ENCODE measurements at regions of chr10 and their contacts with region 1.

Region 1: GRCh38 chr10:133347710-133348517 is 741 bp downstream of the PRAP1 start:
- DNase-seq: peak; percentile 75
- ATAC-seq: peak; percentile 66
- H3K4me3 ChIP-seq: peak overlapping the region; percentile 51 to 74 (median 59)
- H3K27ac ChIP-seq: peak overlapping the region; percentile 80
- H3K4me1 ChIP-seq: peaks cover 65% of the 10 kb centered on the region
- H3K27me3 ChIP-seq: no peaks in the 10 kb centered on the region
- CTCF ChIP-seq: peak; percentile 36; the same call in 1 of the 2 replicates
- EP300 ChIP-seq: peak in 1 of 2 experiments; percentile 66; a peak in 1 of 4 replicates
- POLR2A ChIP-seq: no peak
- RAD21 ChIP-seq: peak; percentile 38

Region 2: GRCh38 chr10:132774902-132775747 is 572.8 kb before region 1 on chr10:
- CTCF ChIA-PET with region 1: no interaction called
- POLR2A ChIA-PET with region 1: no interaction called
- in situ Hi-C with region 1: no loop called
- intact Hi-C with region 1: no loop called
- DNase-seq: no peak
- ATAC-seq: no peak
- H3K4me3 ChIP-seq: no peak overlapping the region; a peak in 1 of 6 replicates
- H3K27ac ChIP-seq: no peak overlapping the region
- H3K4me1 ChIP-seq: peaks cover 12% of the 10 kb centered on the region
- H3K27me3 ChIP-seq: no peaks in the 10 kb centered on the region
- CTCF ChIP-seq: no peak
- EP300 ChIP-seq: no peak
- POLR2A ChIP-seq: no peak
- RAD21 ChIP-seq: no peak

Region 3: GRCh38 chr10:133264461-133264860 is 83.5 kb before region 1 on chr10:
- CTCF ChIA-PET with region 1: no interaction called
- POLR2A ChIA-PET with region 1: no interaction called
- in situ Hi-C with region 1: no loop called
- intact Hi-C with region 1: no loop called
- DNase-seq: no peak
- ATAC-seq: no peak
- H3K4me3 ChIP-seq: no peak overlapping the region
- H3K27ac ChIP-seq: no peak overlapping the region
- H3K4me1 ChIP-seq: peaks cover 11% of the 10 kb centered on the region; the same call in 1 of the 2 replicates
- H3K27me3 ChIP-seq: peaks cover 7 to 29% of the 10 kb centered on the region in 2 experiments; a peak in 4 of 5 replicates
- CTCF ChIP-seq: no peak
- EP300 ChIP-seq: no peak
- POLR2A ChIP-seq: no peak
- RAD21 ChIP-seq: no peak

Region 4: GRCh38 chr10:133324198-133324792 is 23.6 kb before region 1 on chr10:
- CTCF ChIA-PET with region 1: no interaction called
- POLR2A ChIA-PET with region 1: interaction called, 31 read pairs
- in situ Hi-C with region 1: no loop called
- intact Hi-C with region 1: loop called (anchors 1 kb)
- DNase-seq: peak; percentile 62
- ATAC-seq: peak; percentile 79
- H3K4me3 ChIP-seq: peak overlapping the region; percentile 52 to 74 (median 61); a peak in 5 of 6 replicates
- H3K27ac ChIP-seq: no peak overlapping the region
- H3K4me1 ChIP-seq: peaks cover 28% of the 10 kb centered on the region
- H3K27me3 ChIP-seq: peaks cover 4 to 47% of the 10 kb centered on the region in 2 experiments
- CTCF ChIP-seq: no peak
- EP300 ChIP-seq: no peak
- POLR2A ChIP-seq: no peak
- RAD21 ChIP-seq: no peak

Region 5: DNA sequence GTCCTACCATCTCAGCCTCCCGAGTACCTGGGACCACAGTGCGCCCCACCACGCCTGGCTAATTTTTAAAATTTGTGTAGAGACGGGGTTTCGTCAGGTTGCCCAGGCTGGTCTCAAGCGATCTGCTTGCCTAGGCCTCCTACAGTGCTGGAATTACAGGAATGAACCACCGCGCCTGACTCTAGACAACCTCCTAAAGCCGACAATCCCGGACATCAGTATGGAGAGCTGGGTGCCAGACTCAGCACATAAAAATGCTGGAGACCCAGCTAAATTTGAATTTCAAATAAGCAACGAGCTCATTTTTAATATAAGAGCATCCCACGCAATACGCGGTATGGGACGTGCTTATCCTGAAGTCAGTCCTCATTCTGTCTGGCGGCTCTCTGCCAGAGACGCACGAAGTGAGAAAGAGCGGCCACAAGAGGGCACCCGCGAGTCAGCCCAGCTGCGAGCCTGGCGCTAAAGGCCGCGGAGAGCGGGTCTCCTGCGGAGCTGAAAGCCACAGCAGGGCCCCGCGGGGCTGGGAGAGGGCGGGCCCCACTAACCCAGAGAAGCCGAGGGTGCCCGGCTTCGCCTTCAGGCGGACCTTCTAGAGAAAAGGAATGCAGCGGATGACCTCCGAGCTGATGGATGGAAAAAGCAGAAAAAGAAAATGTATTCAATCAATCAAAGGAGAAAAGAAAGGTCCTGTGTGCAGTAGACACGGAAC is 18.3 kb before region 1 on chr10:
- CTCF ChIA-PET with region 1: no interaction called
- POLR2A ChIA-PET with region 1: interaction called, 31 read pairs
- in situ Hi-C with region 1: no loop called
- intact Hi-C with region 1: loop called (anchors 1 kb)
- DNase-seq: peak; percentile 70
- ATAC-seq: peak; percentile 87
- H3K4me3 ChIP-seq: peak overlapping the region in 1 of 3 experiments; percentile 40; a peak in 2 of 6 replicates
- H3K27ac ChIP-seq: no peak overlapping the region
- H3K4me1 ChIP-seq: peaks cover 31% of the 10 kb centered on the region
- H3K27me3 ChIP-seq: peaks cover 7 to 73% of the 10 kb centered on the region in 2 experiments
- CTCF ChIP-seq: peak; percentile 92
- EP300 ChIP-seq: no peak
- POLR2A ChIP-seq: no peak
- RAD21 ChIP-seq: peak; percentile 92

Region 6: GRCh38 chr10:133373104-133373624 is 25.2 kb after region 1 on chr10 and contains the start of gene ECHS1:
- CTCF ChIA-PET with region 1: no interaction called
- POLR2A ChIA-PET with region 1: interaction called, 22 read pairs
- in situ Hi-C with region 1: no loop called
- intact Hi-C with region 1: no loop called
- DNase-seq: peak; percentile 84
- ATAC-seq: peak; percentile 96
- H3K4me3 ChIP-seq: peak within 1 kb of the TSS; percentile 65 to 100 (median 91); a peak in 5 of 6 replicates
- H3K27ac ChIP-seq: peak within 1 kb of the TSS; percentile 66
- H3K4me1 ChIP-seq: peaks cover 35% of the 10 kb centered on the region
- H3K27me3 ChIP-seq: peaks cover 0 to 3% of the 10 kb centered on the region in 2 experiments; a peak in 1 of 5 replicates
- CTCF ChIP-seq: no peak
- EP300 ChIP-seq: no peak
- POLR2A ChIP-seq: peak in 1 of 2 experiments; percentile 86; a peak in 2 of 4 replicates
- RAD21 ChIP-seq: peak; percentile 49; the same call in 1 of the 2 replicates
- total RNA-seq, gene ECHS1: 195 and 233 TPM in 2 replicates

Region 7: GRCh38 chr10:133378251-133379096 is 30.6 kb after region 1 on chr10:
- CTCF ChIA-PET with region 1: no interaction called
- POLR2A ChIA-PET with region 1: interaction called, 22 read pairs
- in situ Hi-C with region 1: no loop called
- intact Hi-C with region 1: no loop called
- DNase-seq: peak; percentile 46
- ATAC-seq: peak; percentile 69
- H3K4me3 ChIP-seq: peak overlapping the region; percentile 56 to 86 (median 72)
- H3K27ac ChIP-seq: peak overlapping the region; percentile 82
- H3K4me1 ChIP-seq: peaks cover 25% of the 10 kb centered on the region
- H3K27me3 ChIP-seq: peaks cover 0 to 3% of the 10 kb centered on the region in 2 experiments; a peak in 1 of 5 replicates
- CTCF ChIP-seq: no peak
- EP300 ChIP-seq: peak in 1 of 2 experiments; percentile 52; a peak in 2 of 4 replicates
- POLR2A ChIP-seq: peak in 1 of 2 experiments; percentile 43; a peak in 1 of 4 replicates
- RAD21 ChIP-seq: no peak